ENCODE measurements at regions of chr2 and their contacts with region 1.

Region 1: GRCh38 chr2:30239308-30239985 is 8.1 kb downstream of the LBH start:
- DNase-seq: peak; percentile 88
- ATAC-seq: peak; percentile 69
- H3K4me3 Mint-ChIP-seq: peak overlapping the region; percentile 78
- H3K27ac Mint-ChIP-seq: peak overlapping the region; percentile 97
- H3K4me1 Mint-ChIP-seq: peaks cover 89% of the 10 kb centered on the region
- H3K27me3 Mint-ChIP-seq: no peaks in the 10 kb centered on the region
- CTCF ChIP-seq: peak; percentile 93

Region 2: GRCh38 chr2:30225131-30225762 is 14.2 kb before region 1 on chr2:
- CTCF ChIA-PET with region 1: interaction called, 57 read pairs
- POLR2A ChIA-PET with region 1: interaction called, 440 read pairs
- intact Hi-C with region 1: no loop called
- DNase-seq: peak; percentile 53
- ATAC-seq: peak; percentile 45
- H3K4me3 Mint-ChIP-seq: peak overlapping the region; percentile 87
- H3K27ac Mint-ChIP-seq: peak overlapping the region; percentile 99
- H3K4me1 Mint-ChIP-seq: peaks cover 74% of the 10 kb centered on the region
- H3K27me3 Mint-ChIP-seq: no peaks in the 10 kb centered on the region
- CTCF ChIP-seq: no peak

Region 3: DNA sequence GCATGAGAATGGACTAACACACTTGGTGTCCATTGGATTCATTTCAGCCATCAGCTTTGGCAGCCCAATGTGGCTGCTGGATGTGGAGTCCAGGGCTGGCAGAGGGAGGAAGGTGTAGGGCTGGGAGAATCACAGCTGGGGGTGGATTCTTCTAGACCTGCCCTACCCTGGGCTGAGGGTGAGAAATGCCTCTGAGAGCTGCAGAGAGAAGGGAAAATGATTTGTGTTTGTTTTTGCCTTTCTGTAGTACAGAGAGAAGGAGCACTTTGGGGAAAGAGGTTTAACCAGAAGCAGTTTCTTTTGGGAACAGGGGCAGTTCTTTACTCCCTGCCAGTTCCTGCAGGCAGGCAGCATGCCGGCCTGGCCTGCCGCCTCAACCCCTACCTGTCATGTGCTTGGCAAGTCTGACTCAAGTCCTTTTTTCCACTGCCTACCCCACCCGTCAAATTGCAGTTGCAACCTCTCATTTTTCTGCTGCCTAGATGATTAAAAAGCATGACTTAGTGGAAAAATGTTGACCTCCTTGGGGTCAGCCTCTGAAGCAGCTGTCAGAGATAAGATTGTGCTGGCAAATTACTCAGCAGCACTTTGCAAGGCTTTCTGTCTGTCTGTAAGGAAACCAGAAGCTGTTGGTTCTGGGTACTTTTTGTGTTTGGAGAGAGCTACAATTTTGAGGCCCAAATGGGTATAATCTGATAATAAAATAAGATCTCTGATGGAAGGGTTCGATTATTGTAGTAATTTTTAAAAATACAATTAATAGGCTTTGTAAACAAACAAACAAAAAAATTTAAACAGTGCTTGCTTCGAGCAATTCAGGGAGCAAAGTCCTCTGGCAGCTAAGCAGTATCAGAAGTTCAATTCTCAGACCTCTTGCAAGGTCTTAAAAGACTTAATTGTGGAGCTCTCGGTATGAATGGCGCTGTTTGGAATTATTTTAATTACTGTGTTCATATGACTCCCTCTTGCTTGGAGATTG is 13.6 kb after region 1 on chr2:
- CTCF ChIA-PET with region 1: interaction called, 216 read pairs
- POLR2A ChIA-PET with region 1: interaction called, 440 read pairs
- intact Hi-C with region 1: no loop called
- DNase-seq: peak; percentile 88
- ATAC-seq: peak; percentile 67
- H3K4me3 Mint-ChIP-seq: peak overlapping the region; percentile 53
- H3K27ac Mint-ChIP-seq: peak overlapping the region; percentile 95
- H3K4me1 Mint-ChIP-seq: peaks cover 96% of the 10 kb centered on the region
- H3K27me3 Mint-ChIP-seq: peaks cover 2% of the 10 kb centered on the region
- CTCF ChIP-seq: no peak

Region 4: GRCh38 chr2:30266051-30266621 is 26.7 kb after region 1 on chr2:
- CTCF ChIA-PET with region 1: interaction called, 216 read pairs
- POLR2A ChIA-PET with region 1: interaction called, 440 read pairs
- intact Hi-C with region 1: loop called (anchors 5 kb)
- DNase-seq: peak; percentile 73
- ATAC-seq: peak; percentile 57
- H3K4me3 Mint-ChIP-seq: peak overlapping the region; percentile 76
- H3K27ac Mint-ChIP-seq: peak overlapping the region; percentile 99
- H3K4me1 Mint-ChIP-seq: peaks cover 81% of the 10 kb centered on the region
- H3K27me3 Mint-ChIP-seq: no peaks in the 10 kb centered on the region
- CTCF ChIP-seq: no peak

Region 5: DNA sequence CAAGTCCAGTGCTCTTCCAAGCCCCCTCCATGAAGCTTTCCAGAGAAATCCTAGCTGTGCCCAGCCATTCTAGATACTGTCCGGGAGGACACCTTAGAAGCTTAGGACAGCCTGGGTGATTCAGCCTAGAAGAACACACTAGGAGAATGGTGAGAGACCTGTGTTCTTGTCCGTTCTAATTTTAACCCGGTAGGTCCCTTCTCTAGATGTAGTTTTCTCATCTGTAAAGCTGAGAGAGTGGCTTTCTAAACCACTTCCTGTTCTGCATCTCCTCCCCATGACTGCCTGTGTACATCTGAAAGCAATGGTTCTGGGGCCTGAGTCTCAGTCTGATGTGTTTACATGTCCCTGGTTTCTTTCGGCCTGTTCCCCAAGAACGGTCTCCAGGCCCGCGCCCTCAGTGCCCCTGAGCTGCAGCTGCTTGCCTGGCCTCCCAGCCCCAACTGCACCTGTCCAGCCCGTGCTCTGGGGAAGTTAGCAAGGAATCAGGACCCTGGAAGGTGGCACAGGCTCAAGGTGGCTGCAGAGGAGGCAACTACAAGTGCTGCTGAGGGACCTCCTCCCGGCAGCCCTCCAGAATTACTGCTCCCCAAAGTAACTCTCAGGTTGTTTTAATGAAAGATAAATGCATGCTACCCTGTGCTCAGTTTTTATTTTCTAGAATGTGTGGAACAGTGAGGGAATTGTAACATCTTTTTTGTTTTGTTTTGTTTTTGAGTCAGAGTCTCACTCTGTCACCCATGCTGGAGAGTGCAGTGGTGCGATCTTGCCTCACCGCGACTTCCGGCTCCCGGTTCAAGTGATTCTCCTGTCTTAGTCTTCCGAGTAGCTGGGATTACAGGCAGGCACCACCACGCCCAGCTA is 97.8 kb after region 1 on chr2:
- CTCF ChIA-PET with region 1: interaction called, 11 read pairs
- POLR2A ChIA-PET with region 1: interaction called, 7 read pairs
- intact Hi-C with region 1: loop called (anchors 5 kb)
- DNase-seq: peak; percentile 67
- ATAC-seq: peak; percentile 76
- H3K4me3 Mint-ChIP-seq: peak overlapping the region; percentile 59
- H3K27ac Mint-ChIP-seq: peak overlapping the region; percentile 96
- H3K4me1 Mint-ChIP-seq: peaks cover 78% of the 10 kb centered on the region
- H3K27me3 Mint-ChIP-seq: no peaks in the 10 kb centered on the region
- CTCF ChIP-seq: no peak

Region 6: DNA sequence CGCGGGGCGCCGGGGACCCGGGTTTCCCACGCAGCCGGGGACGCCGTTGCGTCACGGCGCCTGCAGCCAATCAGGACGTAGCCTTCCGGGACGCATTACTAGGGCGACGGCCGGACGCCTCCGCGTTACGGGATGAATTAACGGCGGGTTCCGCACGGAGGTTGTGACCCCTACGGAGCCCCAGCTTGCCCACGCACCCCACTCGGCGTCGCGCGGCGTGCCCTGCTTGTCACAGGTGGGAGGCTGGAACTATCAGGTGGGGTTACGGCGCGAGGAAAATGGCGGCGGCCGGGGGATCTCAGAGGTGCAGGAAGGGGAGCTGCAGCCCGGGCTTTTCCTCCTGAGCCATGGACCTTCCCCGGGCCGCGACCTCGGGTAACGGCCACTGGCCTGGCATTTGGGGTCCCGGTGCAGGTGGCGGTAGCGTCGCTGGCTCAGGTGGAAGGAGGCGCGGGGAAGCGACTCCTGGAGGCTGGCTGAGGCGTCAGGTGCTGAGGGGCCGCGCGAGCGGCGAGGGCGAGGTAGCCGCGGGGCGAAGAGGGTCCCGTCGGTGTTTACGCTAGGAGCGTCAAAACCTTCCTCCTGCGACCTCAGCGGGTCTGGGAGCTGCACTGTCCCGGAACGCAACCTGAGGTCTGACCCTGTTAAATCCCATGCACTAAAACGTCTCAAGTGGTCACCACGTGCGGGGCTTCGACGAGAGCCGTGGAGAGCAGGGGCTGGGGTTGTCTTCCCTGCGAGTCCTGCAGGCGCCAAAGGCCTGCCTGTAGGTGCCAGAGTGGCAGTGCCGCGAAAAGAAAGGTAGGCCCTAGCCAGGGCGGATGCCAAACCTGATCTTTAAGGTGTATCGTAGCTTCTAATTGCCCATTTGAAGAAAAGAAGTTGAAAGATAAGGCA is 207.9 kb after region 1 on chr2 and contains the start of gene LCLAT1:
- CTCF ChIA-PET with region 1: interaction called, 4 read pairs
- POLR2A ChIA-PET with region 1: interaction called, 14 read pairs
- intact Hi-C with region 1: no loop called
- DNase-seq: peak; percentile 90
- ATAC-seq: peak; percentile 88
- H3K4me3 Mint-ChIP-seq: peak within 1 kb of the TSS; percentile 89
- H3K27ac Mint-ChIP-seq: peak within 1 kb of the TSS; percentile 97
- H3K4me1 Mint-ChIP-seq: peaks cover 38% of the 10 kb centered on the region
- H3K27me3 Mint-ChIP-seq: no peaks in the 10 kb centered on the region
- CTCF ChIP-seq: no peak
- total RNA-seq, gene LCLAT1: 19.0 to 20.5 TPM